H1 (cell line): ENCODE measurements at regions of chr16 and their contacts with region 1.

Region 1: GRCh38 chr16:27374804-27375425 is 27.1 kb upstream of the IL21R start:
- DNase-seq: peak; percentile 87 to 93
- H3K4me3 ChIP-seq: no peak overlapping the region
- H3K27ac ChIP-seq: no peak overlapping the region
- H3K4me1 ChIP-seq: peaks cover 0 to 2% (median 0%) of the 10 kb centered on the region in 4 experiments; a peak in 3 of 7 replicates
- H3K27me3 ChIP-seq: no peaks in the 10 kb centered on the region
- CTCF ChIP-seq: peak; percentile 64 to 86 (median 79)
- EP300 ChIP-seq: no peak
- POLR2A ChIP-seq: no peak
- RAD21 ChIP-seq: peak; percentile 63 to 73

Region 2: DNA sequence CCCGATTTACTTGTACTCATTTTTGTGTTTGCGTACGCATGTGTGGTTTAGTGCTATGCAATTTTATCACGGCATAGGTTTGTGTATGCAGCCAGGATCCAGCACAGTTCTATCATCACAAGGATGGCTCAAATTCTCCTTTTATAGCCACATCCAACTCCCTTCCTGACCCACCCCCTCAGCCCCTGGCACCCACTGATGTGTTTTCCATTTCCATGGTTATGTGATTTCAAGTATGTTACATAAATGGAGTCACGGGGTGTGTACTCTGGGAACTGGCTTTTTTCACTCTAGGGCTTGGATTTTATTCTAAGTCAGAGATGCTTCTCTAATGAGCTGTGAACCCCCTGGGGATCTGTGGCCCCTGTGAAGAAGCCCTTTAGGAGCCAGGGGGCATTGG is 44.4 kb before region 1 on chr16:
- CTCF ChIA-PET with region 1: no interaction called
- POLR2A ChIA-PET with region 1: no interaction called
- DNase-seq: no peak
- H3K4me3 ChIP-seq: no peak overlapping the region
- H3K27ac ChIP-seq: no peak overlapping the region
- H3K4me1 ChIP-seq: peaks cover 12 to 23% (median 20%) of the 10 kb centered on the region in 4 experiments
- H3K27me3 ChIP-seq: no peaks in the 10 kb centered on the region
- CTCF ChIP-seq: no peak
- EP300 ChIP-seq: no peak
- POLR2A ChIP-seq: no peak
- RAD21 ChIP-seq: no peak

Region 3: DNA sequence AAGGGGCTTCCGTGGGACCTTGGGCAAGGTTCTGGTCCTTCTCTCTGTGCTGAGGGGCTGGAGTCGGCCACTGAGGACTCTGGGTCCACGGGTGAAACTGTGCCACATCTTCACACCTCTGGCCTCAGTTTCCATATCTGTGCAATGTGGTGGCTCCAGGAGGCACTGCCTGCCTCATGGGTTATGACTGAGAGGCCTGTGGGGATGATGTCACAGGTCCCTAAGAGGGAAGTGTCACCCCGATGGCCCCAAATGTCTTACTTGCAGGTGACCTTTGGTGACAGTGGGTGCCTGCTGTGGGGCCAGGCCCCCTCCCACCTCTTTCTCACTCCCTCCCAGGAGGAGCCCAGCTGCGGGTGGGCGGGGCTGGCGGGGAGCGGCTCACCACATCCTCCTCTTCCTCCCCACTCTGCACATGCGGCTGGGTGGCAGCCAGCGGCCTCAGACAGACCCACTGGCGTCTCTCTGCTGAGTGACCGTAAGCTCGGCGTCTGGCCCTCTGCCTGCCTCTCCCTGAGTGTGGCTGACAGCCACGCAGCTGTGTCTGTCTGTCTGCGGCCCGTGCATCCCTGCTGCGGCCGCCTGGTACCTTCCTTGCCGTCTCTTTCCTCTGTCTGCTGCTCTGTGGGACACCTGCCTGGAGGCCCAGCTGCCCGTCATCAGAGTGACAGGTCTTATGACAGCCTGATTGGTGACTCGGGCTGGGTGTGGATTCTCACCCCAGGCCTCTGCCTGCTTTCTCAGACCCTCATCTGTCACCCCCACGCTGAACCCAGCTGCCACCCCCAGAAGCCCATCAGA is 27.1 kb after region 1 on chr16 and contains the start of gene IL21R:
- CTCF ChIA-PET with region 1: interaction called, 14 read pairs
- POLR2A ChIA-PET with region 1: no interaction called
- DNase-seq: no peak
- H3K4me3 ChIP-seq: no peak within 1 kb of the TSS
- H3K27ac ChIP-seq: no peak within 1 kb of the TSS
- H3K4me1 ChIP-seq: peaks cover 0 to 6% (median 4%) of the 10 kb centered on the region in 4 experiments; a peak in 3 of 7 replicates
- H3K27me3 ChIP-seq: no peaks in the 10 kb centered on the region; a peak in 1 of 7 replicates
- CTCF ChIP-seq: no peak
- EP300 ChIP-seq: no peak
- POLR2A ChIP-seq: no peak
- RAD21 ChIP-seq: no peak
- total RNA-seq, gene IL21R: 0.34 TPM in 2 replicates